Mammary epithelial cell (primary cell): ENCODE measurements at regions of chr17 and their contacts with region 1.

Region 1: GRCh38 chr17:32723310-32723955 is 153.5 kb downstream of the MYO1D start:
- DNase-seq: no peak
- H3K4me3 ChIP-seq: no peak overlapping the region
- H3K27ac ChIP-seq: no peak overlapping the region
- H3K4me1 ChIP-seq: no peaks in the 10 kb centered on the region
- H3K27me3 ChIP-seq: no peaks in the 10 kb centered on the region
- CTCF ChIP-seq: no peak

Region 2: GRCh38 chr17:32664936-32665583 is 58.4 kb before region 1 on chr17:
- CTCF ChIA-PET with region 1: no interaction called
- dilution Hi-C with region 1: no loop called
- in situ Hi-C with region 1: loop called in 1 of 2 experiments (anchors 10 kb)
- intact Hi-C with region 1: no loop called
- DNase-seq: no peak
- H3K4me3 ChIP-seq: no peak overlapping the region
- H3K27ac ChIP-seq: no peak overlapping the region
- H3K4me1 ChIP-seq: no peaks in the 10 kb centered on the region
- H3K27me3 ChIP-seq: no peaks in the 10 kb centered on the region
- CTCF ChIP-seq: no peak